Breast epithelium (tissue), 4 donors: ENCODE measurements at regions of chr18 and their contacts with region 1.

Region 1: GRCh38 chr18:41655074-41655473 is 300.0 kb upstream of the PIK3C3 start:
- DNase-seq: no peak
- H3K4me3 ChIP-seq: no peak overlapping the region
- H3K27ac ChIP-seq: no peak overlapping the region
- H3K4me1 ChIP-seq: no peaks in the 10 kb centered on the region
- H3K27me3 ChIP-seq: no peaks in the 10 kb centered on the region
- CTCF ChIP-seq: no peak
- POLR2A ChIP-seq: no peak

Region 2: DNA sequence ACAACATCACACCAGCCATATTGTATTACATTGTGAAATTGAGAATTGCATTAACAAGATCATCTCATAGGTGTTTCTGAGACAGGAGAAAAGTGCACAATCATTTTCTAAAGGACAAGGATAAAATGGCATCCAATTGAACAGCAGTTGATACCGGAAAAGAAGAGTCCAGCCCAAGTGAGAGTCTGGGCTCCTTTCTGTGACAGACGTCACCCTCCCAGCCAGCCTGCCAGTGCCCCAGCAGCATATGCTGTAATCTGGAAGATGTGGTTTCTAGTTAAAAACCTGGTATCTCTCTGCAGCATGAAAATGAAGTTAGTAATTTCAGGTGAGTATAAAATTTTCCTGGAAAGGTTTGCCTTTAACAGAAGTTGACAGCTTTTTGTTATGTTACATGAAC is 1231.8 kb before region 1 on chr18:
- intact Hi-C with region 1: no loop called
- DNase-seq: no peak
- H3K4me3 ChIP-seq: no peak overlapping the region
- H3K27ac ChIP-seq: no peak overlapping the region
- H3K4me1 ChIP-seq: no peaks in the 10 kb centered on the region
- H3K27me3 ChIP-seq: no peaks in the 10 kb centered on the region
- CTCF ChIP-seq: no peak
- POLR2A ChIP-seq: no peak

Region 3: DNA sequence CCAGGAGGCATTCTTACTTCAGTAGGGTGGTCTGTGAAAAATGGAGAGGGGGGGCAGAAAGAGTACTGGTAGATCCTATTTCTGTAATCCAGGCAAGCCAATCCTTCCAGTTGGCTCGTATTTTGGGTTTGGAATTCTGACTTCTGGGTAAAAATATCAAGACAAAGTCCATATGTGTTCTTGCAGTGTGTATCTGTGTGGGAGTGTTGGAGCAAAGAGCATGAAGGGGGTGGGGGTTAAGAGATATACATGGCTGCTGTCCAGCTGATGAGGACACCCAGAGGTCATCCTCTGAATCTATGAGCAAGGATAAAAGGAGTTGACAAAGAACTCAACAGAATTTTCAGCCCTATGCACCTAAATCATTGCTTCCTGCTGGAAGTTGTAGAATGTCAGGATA is 75.9 kb before region 1 on chr18:
- intact Hi-C with region 1: loop called (anchors 2 kb)
- DNase-seq: no peak
- H3K4me3 ChIP-seq: no peak overlapping the region
- H3K27ac ChIP-seq: no peak overlapping the region
- H3K4me1 ChIP-seq: no peaks in the 10 kb centered on the region
- H3K27me3 ChIP-seq: no peaks in the 10 kb centered on the region
- CTCF ChIP-seq: no peak
- POLR2A ChIP-seq: no peak